ENCODE measurements at regions of chr3 and their contacts with region 1.

Region 1: DNA sequence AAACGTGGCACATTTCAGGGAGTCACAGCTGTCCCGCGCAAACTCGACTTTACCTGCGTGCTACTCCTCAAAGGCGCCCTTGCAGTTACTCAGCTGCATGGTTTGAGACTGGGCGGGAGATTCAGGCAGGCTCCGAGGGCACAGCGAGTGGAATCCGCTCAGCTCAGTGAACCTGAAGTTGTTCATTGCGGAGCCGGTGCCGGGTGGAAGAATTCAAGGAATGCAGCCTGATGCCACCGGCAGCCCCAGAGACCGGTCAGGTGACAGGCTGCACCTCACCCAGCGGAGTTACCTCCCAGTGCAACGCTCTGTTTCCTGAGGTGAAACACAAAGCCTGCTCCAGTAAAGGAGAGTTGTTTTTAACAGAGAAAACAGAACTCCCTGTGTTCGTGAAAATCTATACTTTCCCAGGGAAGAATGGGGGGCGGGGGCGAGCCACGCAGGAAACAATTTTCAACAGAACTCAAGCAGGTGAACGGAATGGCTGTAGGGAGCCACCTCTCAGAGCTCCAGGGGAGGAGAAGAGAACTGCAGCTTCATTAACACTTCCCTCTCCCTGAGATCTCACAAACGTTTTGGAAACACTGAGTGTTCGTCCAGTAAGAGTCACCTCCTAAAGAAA is 3.8 kb downstream of the VEPH1 start:
- DNase-seq: peak; percentile 70
- H3K4me3 ChIP-seq: peak overlapping the region; percentile 23
- H3K27ac ChIP-seq: no peak overlapping the region
- H3K4me1 ChIP-seq: no peaks in the 10 kb centered on the region
- H3K27me3 ChIP-seq: no peaks in the 10 kb centered on the region
- CTCF ChIP-seq: no peak

Region 2: DNA sequence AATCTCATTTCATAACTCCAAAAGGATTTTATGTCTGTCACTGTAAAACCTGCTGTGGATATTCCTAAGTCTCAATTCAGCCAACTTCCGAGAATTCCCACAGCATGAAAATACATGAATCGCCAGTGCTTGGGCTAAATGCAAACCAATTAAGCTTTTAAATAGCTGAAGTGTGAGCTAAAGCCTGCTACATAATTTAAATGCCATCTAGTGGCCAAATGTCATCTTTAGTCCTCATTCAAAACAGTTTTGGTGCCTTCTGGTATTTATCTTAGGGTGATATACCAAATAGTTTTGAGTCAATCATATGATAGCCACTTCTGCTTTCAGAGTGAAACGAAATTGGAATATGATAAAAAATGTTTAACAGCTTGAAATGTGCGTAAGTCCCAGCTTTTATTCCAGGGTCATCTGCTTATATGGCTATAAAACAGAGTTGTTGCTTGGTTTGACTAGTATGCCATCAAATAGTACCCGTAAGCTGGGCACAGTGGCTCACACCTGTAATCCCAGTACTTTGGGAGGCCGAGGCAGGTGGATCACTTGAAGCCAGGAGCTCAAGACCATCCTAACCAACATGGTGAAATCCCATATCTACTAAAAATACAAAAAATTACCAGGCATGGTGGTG is 297.7 kb before region 1 on chr3:
- intact Hi-C with region 1: loop called (anchors 5 kb)
- DNase-seq: no peak
- H3K4me3 ChIP-seq: no peak overlapping the region
- H3K27ac ChIP-seq: no peak overlapping the region
- H3K4me1 ChIP-seq: no peaks in the 10 kb centered on the region
- H3K27me3 ChIP-seq: no peaks in the 10 kb centered on the region
- CTCF ChIP-seq: peak; percentile 45

Region 3: GRCh38 chr3:157606011-157606851 is 106.8 kb after region 1 on chr3:
- intact Hi-C with region 1: no loop called
- DNase-seq: peak; percentile 44
- H3K4me3 ChIP-seq: no peak overlapping the region
- H3K27ac ChIP-seq: no peak overlapping the region
- H3K4me1 ChIP-seq: no peaks in the 10 kb centered on the region
- H3K27me3 ChIP-seq: no peaks in the 10 kb centered on the region
- CTCF ChIP-seq: peak; percentile 69

Region 4: DNA sequence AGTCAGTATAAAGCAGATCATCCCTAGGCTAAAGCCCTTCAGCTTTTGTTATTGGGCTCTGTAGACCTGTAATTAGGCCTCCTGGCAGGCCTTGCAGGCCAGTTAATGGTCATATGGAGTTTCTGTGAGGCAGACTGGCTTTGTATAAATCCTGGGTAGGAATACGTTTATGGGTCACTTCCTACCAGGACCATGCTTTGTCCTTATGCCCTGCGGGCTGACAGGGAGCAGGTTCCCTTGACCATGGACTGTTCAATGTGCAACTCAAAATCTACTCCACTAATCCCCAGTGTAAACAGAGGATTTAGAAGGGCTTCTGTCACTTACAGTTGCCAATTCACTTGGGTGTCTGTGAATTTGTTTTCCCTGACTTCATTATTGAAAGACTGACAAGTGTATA is 868.8 kb after region 1 on chr3:
- intact Hi-C with region 1: no loop called
- DNase-seq: no peak
- H3K4me3 ChIP-seq: no peak overlapping the region
- H3K27ac ChIP-seq: no peak overlapping the region
- H3K4me1 ChIP-seq: no peaks in the 10 kb centered on the region
- H3K27me3 ChIP-seq: no peaks in the 10 kb centered on the region
- CTCF ChIP-seq: no peak

Measured in colonic mucosa (tissue), 4 donors.